ENCODE measurements at regions of chr15 and their contacts with region 1.

Region 1: DNA sequence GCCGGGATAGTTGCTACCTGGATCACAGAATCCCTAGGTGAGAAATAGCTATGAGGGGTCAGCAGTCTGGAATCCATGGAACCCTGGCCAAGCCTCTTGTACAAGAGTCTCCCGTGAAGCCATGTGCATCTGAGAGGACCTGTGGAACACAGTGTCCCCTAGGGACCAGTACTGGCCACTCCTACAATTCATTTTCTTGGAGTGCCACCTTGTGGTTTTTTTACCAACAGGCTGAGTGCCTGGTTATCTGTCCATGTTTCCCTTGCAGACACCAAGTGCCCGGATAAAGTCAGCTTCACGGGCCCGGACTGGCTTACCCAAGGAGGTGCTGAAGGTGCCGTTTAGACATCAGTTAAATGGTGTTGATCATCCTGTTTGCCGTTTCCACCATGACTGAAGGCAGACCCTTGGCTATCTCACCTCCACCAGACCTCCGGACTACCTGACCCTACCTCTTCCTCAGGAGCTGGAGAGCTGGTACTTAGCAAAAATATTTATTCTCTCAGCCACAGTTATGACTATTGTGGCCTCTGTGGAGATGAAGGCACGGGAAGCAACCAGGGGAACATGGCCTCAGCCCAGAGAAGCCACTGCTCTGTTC is 93.9 kb downstream of the RBPMS2 start:
- DNase-seq: peak; percentile 86 to 98
- ATAC-seq: peak; percentile 95 to 97
- H3K4me3 ChIP-seq: no peak overlapping the region
- H3K27ac ChIP-seq: peak overlapping the region in 1 of 2 experiments; percentile 9; a peak in 1 of 6 replicates
- H3K4me1 ChIP-seq: peaks cover 4% of the 10 kb centered on the region; the same call in 1 of the 3 replicates
- CTCF ChIP-seq: peak; percentile 99
- EP300 ChIP-seq: no peak
- POLR2A ChIP-seq: no peak
- RAD21 ChIP-seq: peak; percentile 97 to 99

Region 2: DNA sequence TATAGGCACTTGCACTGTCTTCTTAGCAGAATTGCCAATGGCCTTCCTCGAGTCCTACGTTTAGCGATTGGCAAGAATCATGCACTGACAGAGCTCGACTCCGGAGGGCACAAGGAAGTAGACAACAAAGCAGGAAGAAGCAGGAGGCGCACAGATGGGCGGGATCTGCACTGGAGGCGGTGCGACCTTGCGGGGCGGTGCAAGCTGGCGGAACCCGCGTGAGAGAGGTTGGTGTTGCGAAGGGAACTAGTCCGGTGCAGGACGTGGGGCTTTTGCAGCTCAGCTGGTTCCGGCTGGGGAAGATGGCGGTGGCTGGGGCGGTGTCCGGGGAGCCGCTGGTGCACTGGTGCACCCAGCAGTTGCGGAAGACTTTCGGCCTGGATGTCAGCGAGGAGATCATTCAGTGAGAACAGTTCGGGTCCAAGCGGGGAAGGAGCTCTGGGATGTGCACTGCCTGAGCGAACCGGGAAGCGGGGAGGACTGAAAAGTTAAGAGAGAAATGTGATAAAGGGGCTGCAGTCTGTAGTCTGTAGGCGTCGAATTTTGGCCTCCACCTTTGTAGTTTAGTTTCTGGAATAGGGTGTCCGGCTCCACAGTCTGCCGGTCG is 293.9 kb before region 1 on chr15 and contains the start of gene TRIP4:
- CTCF ChIA-PET with region 1: interaction called, 16 read pairs
- POLR2A ChIA-PET with region 1: no interaction called
- DNase-seq: peak; percentile 98 to 100
- ATAC-seq: peak; percentile 100
- H3K4me3 ChIP-seq: peak within 1 kb of the TSS; percentile 72
- H3K27ac ChIP-seq: peak within 1 kb of the TSS; percentile 83 to 87
- H3K4me1 ChIP-seq: peaks cover 9% of the 10 kb centered on the region
- CTCF ChIP-seq: 0 out of 3 replicates have a peak, but pooled peaks have one; percentile 11
- EP300 ChIP-seq: 0 out of 5 replicates have a peak, but pooled peaks of 1 of the 2 experiments have one; percentile 23
- POLR2A ChIP-seq: peak; percentile 92
- RAD21 ChIP-seq: peak; percentile 37 to 53; a peak in 3 of 5 replicates
- polyA plus RNA-seq, gene TRIP4: 30.0 and 34.9 TPM in 2 replicates

Region 3: DNA sequence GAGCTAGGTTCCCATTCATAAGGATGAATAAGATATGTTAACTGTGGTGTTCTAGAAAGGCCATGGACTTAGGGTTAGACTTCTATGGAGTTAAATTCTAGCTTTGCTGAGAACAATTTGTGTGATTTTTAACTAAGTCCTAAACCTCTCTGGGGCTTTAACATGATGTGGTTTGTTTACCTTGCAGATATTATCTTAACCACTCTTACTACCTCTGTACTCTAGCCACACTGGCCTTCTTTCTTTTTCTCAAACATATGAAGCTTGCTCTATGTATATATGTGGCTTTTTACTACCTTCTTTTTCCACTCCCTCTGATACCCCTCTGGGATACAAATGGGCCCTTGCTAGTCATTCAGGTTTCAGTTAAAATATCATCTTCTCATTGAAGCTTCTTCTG is 112.8 kb before region 1 on chr15:
- CTCF ChIA-PET with region 1: no interaction called
- POLR2A ChIA-PET with region 1: no interaction called
- DNase-seq: no peak
- ATAC-seq: no peak
- H3K4me3 ChIP-seq: no peak overlapping the region
- H3K27ac ChIP-seq: no peak overlapping the region
- H3K4me1 ChIP-seq: peaks cover 27% of the 10 kb centered on the region
- CTCF ChIP-seq: no peak
- EP300 ChIP-seq: no peak
- POLR2A ChIP-seq: no peak
- RAD21 ChIP-seq: no peak

Region 4: GRCh38 chr15:64642875-64643274 is 38.6 kb before region 1 on chr15:
- CTCF ChIA-PET with region 1: interaction called, 10 read pairs
- POLR2A ChIA-PET with region 1: no interaction called
- DNase-seq: no peak
- ATAC-seq: peak; percentile 39 to 71; a peak in 3 of 6 replicates
- H3K4me3 ChIP-seq: no peak overlapping the region
- H3K27ac ChIP-seq: peak overlapping the region in 1 of 2 experiments; percentile 18; a peak in 2 of 6 replicates
- H3K4me1 ChIP-seq: peaks cover 24% of the 10 kb centered on the region
- CTCF ChIP-seq: no peak
- EP300 ChIP-seq: no peak
- POLR2A ChIP-seq: no peak
- RAD21 ChIP-seq: no peak

Region 5: GRCh38 chr15:64667736-64668161 is 13.8 kb before region 1 on chr15:
- CTCF ChIA-PET with region 1: interaction called, 55 read pairs
- POLR2A ChIA-PET with region 1: no interaction called
- DNase-seq: no peak
- ATAC-seq: peak in 1 of 2 experiments; percentile 51; a peak in 3 of 6 replicates
- H3K4me3 ChIP-seq: no peak overlapping the region
- H3K27ac ChIP-seq: peak overlapping the region in 1 of 2 experiments; percentile 10; a peak in 1 of 6 replicates
- H3K4me1 ChIP-seq: peaks cover 26% of the 10 kb centered on the region
- CTCF ChIP-seq: no peak
- EP300 ChIP-seq: no peak
- POLR2A ChIP-seq: no peak
- RAD21 ChIP-seq: no peak

Region 6: GRCh38 chr15:64702816-64703646 is 21.5 kb after region 1 on chr15:
- CTCF ChIA-PET with region 1: interaction called, 1,052 read pairs
- POLR2A ChIA-PET with region 1: no interaction called
- DNase-seq: peak; percentile 93 to 98
- ATAC-seq: peak; percentile 93 to 95
- H3K4me3 ChIP-seq: peak overlapping the region; percentile 75
- H3K27ac ChIP-seq: peak overlapping the region; percentile 88 to 94
- H3K4me1 ChIP-seq: peaks cover 46% of the 10 kb centered on the region
- CTCF ChIP-seq: peak; percentile 10; the same call in 1 of the 3 replicates
- EP300 ChIP-seq: no peak; a peak in 1 of 5 replicates
- POLR2A ChIP-seq: peak; percentile 98
- RAD21 ChIP-seq: no peak

Region 7: DNA sequence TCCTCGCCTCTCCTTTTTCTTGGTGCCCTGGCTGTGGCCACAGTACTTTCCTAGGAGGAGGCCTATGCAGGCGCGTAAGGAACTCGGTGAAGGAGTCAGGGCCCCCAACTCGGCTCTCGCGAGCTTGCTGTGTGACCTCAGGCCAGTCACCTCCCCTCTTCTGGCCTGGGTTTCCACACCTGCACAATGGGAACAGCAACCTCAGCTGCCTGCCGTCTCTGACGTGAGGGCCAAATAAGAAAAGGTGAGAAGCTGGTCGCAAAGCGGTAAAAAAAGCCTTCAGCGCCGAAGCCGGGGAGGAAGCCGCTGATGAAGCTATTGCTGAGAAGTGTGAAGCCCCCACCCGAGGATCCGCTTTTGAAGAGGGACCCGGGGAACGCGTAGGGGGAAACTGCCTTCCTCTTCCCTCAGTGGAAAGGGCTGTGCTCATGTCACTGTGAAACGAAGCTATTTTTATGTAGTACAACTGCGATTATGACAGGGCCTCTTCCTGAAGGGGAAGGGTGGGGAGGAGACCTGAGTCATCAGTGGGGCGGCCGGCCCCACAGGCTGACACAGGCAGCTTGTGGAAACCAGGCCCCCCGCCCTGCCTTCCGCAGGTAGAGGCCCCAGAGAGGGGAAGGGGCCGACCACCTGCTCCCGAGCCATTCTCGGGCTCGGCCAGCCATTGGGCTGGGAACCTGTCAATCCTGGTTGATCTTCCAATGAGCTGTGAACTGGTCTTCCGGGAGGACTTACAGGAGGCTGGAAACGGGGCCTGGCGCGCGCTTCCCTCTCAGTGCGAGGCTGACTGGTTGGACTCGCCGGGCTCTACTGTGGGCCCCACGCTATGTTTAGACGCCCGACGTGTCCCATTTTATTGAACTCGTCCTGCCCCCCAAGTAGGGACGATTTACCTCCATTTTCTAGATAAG is 212.2 kb after region 1 on chr15:
- CTCF ChIA-PET with region 1: no interaction called
- POLR2A ChIA-PET with region 1: no interaction called
- DNase-seq: peak in 1 of 2 experiments; percentile 62
- ATAC-seq: peak in 1 of 2 experiments; percentile 31; a peak in 3 of 6 replicates
- H3K4me3 ChIP-seq: no peak overlapping the region
- H3K27ac ChIP-seq: no peak overlapping the region
- H3K4me1 ChIP-seq: peaks cover 10% of the 10 kb centered on the region; the same call in 2 of the 3 replicates
- CTCF ChIP-seq: no peak
- EP300 ChIP-seq: no peak
- POLR2A ChIP-seq: no peak
- RAD21 ChIP-seq: no peak

Measured in A549 (cell line).